Calu3 (cell line): ENCODE measurements at regions of chr19 and their contacts with region 1.

Region 1: GRCh38 chr19:42488783-42489521 is 39.3 kb downstream of the CEACAM1 start:
- DNase-seq: peak; percentile 84
- H3K4me3 Mint-ChIP-seq: no peak overlapping the region
- H3K27ac Mint-ChIP-seq: peak overlapping the region; percentile 65
- H3K4me1 Mint-ChIP-seq: peaks cover 19% of the 10 kb centered on the region
- H3K27me3 Mint-ChIP-seq: no peaks in the 10 kb centered on the region
- CTCF ChIP-seq: no peak

Region 2: DNA sequence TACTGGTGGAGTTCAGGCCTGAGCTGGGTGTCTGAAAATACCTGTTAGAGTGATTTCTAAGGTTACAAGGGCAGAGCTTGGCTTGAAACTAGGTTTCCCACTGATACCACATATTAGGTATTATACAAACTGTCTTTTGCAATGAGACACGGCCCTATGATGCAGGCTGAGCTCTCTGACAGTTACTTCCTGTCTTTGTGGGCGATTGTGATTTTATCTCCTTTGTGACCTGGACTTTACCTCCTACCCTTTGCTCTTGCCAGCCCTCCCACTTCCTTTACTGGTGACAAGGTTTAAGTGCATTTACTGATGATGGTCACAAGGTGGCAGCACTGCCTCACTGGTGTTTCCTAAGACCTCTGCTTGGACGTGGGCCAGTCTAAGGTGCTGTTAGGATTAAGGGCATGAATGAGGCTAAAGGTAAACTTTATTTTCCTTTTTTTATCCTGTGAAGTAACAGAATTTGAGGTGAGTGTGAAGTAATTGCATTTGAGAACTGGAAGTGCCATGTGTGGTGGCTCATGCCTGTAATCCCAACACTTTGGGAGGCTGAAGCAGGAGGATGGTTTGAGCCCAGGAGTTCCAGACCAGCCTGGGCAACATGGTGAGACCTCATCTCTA is 38.5 kb before region 1 on chr19:
- CTCF ChIA-PET with region 1: no interaction called
- intact Hi-C with region 1: loop called (anchors 2 kb)
- DNase-seq: peak; percentile 85
- H3K4me3 Mint-ChIP-seq: no peak overlapping the region
- H3K27ac Mint-ChIP-seq: no peak overlapping the region
- H3K4me1 Mint-ChIP-seq: peaks cover 16% of the 10 kb centered on the region
- H3K27me3 Mint-ChIP-seq: no peaks in the 10 kb centered on the region
- CTCF ChIP-seq: peak; percentile 98

Region 3: GRCh38 chr19:42577016-42577415 is 88.1 kb after region 1 on chr19:
- CTCF ChIA-PET with region 1: no interaction called
- intact Hi-C with region 1: no loop called
- DNase-seq: no peak
- H3K4me3 Mint-ChIP-seq: no peak overlapping the region
- H3K27ac Mint-ChIP-seq: no peak overlapping the region
- H3K4me1 Mint-ChIP-seq: no peaks in the 10 kb centered on the region
- H3K27me3 Mint-ChIP-seq: peaks cover 69% of the 10 kb centered on the region
- CTCF ChIP-seq: no peak